ENCODE measurements at regions of chr2 and their contacts with region 1.

Region 1: GRCh38 chr2:100730346-100730745 is 89.6 kb upstream of the NPAS2 start:
- DNase-seq: peak; percentile 66 to 82 (median 79)
- ATAC-seq: peak; percentile 85 to 89
- H3K4me3 ChIP-seq: no peak overlapping the region
- H3K27ac ChIP-seq: no peak overlapping the region
- H3K4me1 ChIP-seq: peaks cover 2% of the 10 kb centered on the region
- H3K27me3 ChIP-seq: no peaks in the 10 kb centered on the region

Region 2: DNA sequence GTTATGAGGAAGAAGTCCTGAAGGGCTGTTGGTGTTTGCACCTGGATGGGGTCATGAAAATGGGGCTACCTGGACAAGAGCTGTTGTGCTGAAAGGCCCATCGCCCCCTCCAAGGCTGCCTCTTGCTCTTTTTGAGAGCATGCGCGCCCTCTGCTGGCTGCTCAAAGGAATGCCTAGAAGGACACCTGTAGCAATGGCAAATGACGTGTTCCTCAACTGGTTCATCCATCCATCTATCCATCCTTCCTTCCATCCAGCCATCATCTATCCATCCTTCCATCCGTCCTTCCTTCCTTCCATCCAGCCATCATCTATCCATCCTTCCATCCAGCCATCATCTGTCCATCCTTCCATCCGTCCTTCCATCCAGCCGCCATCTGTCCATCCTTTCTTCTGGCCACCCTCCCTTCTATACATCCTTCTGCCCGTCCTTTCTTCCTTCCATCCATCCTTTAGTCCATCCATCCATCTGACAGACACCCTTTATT is 254.6 kb after region 1 on chr2:
- intact Hi-C with region 1: loop called in 3 of 4 experiments (anchors 2 kb)
- DNase-seq: peak; percentile 81 to 91 (median 91)
- ATAC-seq: peak; percentile 67 to 70
- H3K4me3 ChIP-seq: no peak overlapping the region
- H3K27ac ChIP-seq: no peak overlapping the region
- H3K4me1 ChIP-seq: peaks cover 4% of the 10 kb centered on the region
- H3K27me3 ChIP-seq: no peaks in the 10 kb centered on the region

Measured in right cardiac atrium (tissue), 5 donors.